Left ventricle myocardium inferior (tissue), 1 donor: ENCODE measurements at regions of chr11 and their contacts with region 1.

Region 1: GRCh38 chr11:44538375-44539054 is 26.9 kb upstream of the CD82 start:
- DNase-seq: peak; percentile 76
- H3K4me3 ChIP-seq: peak overlapping the region; percentile 26
- H3K27ac ChIP-seq: no peak overlapping the region
- H3K4me1 ChIP-seq: peaks cover 11% of the 10 kb centered on the region
- H3K27me3 ChIP-seq: no peaks in the 10 kb centered on the region
- CTCF ChIP-seq: peak; percentile 98

Region 2: DNA sequence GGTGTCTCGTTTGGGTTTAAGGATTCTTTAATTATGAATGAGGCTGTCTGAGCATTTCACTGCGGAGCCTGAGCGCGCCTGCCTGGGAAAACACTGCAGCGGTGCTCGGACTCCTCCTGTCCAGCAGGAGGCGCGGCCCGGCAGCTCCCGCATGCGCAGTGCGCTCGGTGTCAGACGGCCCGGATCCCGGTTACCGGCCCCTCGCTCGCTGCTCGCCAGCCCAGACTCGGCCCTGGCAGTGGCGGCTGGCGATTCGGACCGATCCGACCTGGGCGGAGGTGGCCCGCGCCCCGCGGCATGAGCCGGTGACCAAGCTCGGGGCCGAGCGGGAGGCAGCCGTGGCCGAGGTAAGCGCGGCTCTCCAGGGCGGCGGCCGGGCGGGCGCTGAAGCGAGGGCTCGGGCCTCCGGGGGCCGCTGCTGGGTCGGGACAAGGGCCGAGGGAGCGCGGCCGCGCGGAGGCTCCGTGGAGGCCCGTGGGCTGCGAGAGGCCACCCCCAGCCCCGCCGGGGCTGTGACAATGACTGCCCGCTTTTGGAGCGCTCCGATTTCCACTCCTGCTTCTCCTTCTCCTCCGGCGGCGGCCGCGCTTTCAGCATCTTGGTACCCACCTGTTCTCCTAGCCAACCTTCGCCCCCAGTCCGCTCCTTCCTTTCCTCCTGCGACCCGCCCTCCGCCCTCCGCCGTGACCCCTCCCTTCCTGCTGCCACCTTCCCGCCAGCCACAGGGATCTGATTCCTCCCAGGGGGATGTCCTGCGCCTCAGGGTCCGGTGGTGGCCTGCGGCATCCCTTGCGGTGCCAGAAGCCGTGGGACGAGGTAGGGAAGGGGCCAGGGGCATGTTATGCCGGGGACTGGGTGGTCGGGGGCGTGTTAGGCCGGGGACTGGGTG is 442.8 kb before region 1 on chr11 and contains the start of gene EXT2:
- intact Hi-C with region 1: loop called (anchors 10 kb)
- DNase-seq: peak; percentile 89
- H3K4me3 ChIP-seq: peak within 1 kb of the TSS; percentile 92
- H3K27ac ChIP-seq: peak within 1 kb of the TSS; percentile 89
- H3K4me1 ChIP-seq: peaks cover 37% of the 10 kb centered on the region
- H3K27me3 ChIP-seq: no peaks in the 10 kb centered on the region
- CTCF ChIP-seq: peak; percentile 97
- total RNA-seq, gene EXT2: 24.5 TPM

Region 3: DNA sequence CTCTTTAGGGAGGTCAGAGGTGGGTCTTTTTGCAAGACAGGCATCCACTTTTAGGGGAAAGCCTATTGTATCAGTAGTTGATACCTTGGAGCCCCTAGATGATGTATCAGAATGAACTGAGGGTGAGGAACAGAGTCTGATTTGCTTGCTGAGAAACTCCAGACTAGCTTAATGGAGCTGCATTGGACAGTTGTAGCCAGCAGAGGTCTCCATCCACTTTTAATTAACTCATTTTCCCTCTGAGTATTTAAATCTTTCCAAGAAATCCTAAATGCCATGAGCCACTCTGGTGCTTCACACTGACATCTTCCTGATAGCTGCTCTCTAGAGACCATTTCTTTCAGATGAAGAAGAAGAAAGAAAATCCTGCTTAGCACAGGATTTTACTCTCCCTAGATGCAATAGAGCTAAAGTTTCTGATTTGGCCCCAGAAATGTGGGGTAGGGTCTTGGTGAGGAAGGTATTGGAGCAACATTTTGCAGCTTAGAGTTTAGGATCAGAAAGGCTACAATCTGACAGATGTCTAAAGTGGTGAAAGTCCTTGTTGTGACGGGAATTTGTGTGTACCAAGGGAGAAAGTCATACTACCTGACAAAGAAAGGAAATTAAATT is 405.1 kb before region 1 on chr11:
- intact Hi-C with region 1: loop called (anchors 10 kb)
- DNase-seq: no peak
- H3K4me3 ChIP-seq: no peak overlapping the region
- H3K27ac ChIP-seq: no peak overlapping the region
- H3K4me1 ChIP-seq: peaks cover 13% of the 10 kb centered on the region
- H3K27me3 ChIP-seq: no peaks in the 10 kb centered on the region
- CTCF ChIP-seq: peak; percentile 77

Region 4: DNA sequence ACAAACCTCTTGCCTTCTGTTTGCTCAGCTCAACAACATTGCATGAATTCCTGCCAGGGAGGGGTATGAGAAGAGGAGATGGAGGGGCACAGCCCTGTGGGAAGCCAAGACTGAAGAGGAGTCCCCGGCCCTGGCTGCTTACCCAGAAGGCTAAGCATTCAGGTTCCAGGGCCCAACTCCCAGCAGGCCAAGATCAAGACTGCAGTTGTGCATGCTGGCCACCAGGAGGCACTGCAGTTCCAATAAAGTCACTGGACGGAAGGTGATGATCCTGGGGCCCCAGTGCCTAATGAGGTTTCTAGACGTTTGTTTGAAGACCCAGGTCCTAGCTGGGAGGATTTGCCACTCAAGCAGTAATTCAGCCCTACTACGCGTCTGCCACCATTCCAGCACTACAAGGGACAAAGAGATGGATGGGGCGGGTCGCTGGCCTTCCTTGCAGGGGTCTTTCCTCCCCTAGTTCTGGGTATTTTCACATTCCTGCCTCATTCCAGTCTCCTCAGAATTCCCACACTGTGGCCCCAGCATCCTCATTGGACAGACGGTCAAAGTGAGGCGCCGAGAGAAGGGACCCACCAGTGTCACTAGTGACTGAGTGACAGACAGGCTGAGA is 252.1 kb before region 1 on chr11:
- intact Hi-C with region 1: loop called (anchors 5 kb)
- DNase-seq: no peak
- H3K4me3 ChIP-seq: no peak overlapping the region
- H3K27ac ChIP-seq: no peak overlapping the region
- H3K4me1 ChIP-seq: no peaks in the 10 kb centered on the region
- H3K27me3 ChIP-seq: peaks cover 13% of the 10 kb centered on the region
- CTCF ChIP-seq: peak; percentile 95